Caco-2 (cell line): ENCODE measurements at regions of chr20 and their contacts with region 1.

Region 1: GRCh38 chr20:56592817-56593216 is 36.3 kb upstream of the TFAP2C start:
- DNase-seq: no peak
- H3K4me3 ChIP-seq: no peak overlapping the region
- H3K4me3 Mint-ChIP-seq: no peak overlapping the region
- H3K27ac Mint-ChIP-seq: peak overlapping the region; percentile 89
- H3K4me1 ChIP-seq: peaks cover 50% of the 10 kb centered on the region
- H3K4me1 Mint-ChIP-seq: peaks cover 51% of the 10 kb centered on the region
- H3K27me3 ChIP-seq: no peaks in the 10 kb centered on the region
- H3K27me3 Mint-ChIP-seq: no peaks in the 10 kb centered on the region
- CTCF ChIP-seq: no peak

Region 2: GRCh38 chr20:56391037-56391436 is 201.8 kb before region 1 on chr20:
- CTCF ChIA-PET with region 1: no interaction called
- POLR2A ChIA-PET with region 1: no interaction called
- intact Hi-C with region 1: no loop called
- DNase-seq: no peak
- H3K4me3 ChIP-seq: peak overlapping the region; percentile 74
- H3K4me3 Mint-ChIP-seq: no peak overlapping the region
- H3K27ac Mint-ChIP-seq: no peak overlapping the region
- H3K4me1 ChIP-seq: peaks cover 13% of the 10 kb centered on the region
- H3K4me1 Mint-ChIP-seq: peaks cover 22% of the 10 kb centered on the region
- H3K27me3 ChIP-seq: no peaks in the 10 kb centered on the region
- H3K27me3 Mint-ChIP-seq: no peaks in the 10 kb centered on the region
- CTCF ChIP-seq: no peak

Region 3: DNA sequence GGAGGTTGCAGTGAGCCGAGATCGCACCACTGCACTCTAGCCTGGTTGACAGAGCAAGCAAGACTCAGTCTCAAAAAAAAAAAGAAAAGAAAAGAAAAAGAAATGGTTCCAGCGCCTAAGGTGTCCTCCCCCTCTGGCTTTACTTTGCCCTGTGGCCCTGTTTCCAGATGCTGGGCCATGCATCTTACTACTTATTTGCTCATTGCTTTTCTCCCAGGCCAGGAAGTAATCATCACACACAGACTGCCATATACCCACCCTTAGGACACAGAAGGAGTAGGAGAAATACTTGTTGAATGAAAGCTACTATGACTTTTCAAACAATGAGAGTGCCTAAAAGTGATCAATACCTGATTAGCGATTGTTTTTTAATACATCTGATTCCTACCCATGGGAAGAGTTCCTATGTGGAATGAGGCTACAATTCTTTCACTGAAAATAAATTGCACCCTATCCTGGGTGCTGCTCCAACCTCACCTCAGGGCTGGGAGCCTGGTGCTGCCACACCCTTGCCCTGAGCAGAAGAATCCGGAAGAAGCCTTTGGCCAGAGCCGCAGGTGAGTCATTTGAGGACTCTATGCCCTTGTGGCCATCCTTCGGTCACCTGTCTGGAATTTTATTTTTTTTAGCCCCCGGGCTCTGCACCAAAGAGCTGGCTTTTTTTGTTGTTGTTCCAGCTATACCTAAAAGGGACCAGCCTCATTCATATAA is 13.5 kb after region 1 on chr20:
- CTCF ChIA-PET with region 1: no interaction called
- POLR2A ChIA-PET with region 1: no interaction called
- intact Hi-C with region 1: loop called (anchors 1 kb)
- DNase-seq: peak; percentile 94 to 97
- H3K4me3 ChIP-seq: no peak overlapping the region
- H3K4me3 Mint-ChIP-seq: peak overlapping the region; percentile 45
- H3K27ac Mint-ChIP-seq: peak overlapping the region; percentile 94
- H3K4me1 ChIP-seq: peaks cover 63% of the 10 kb centered on the region
- H3K4me1 Mint-ChIP-seq: peaks cover 72% of the 10 kb centered on the region
- H3K27me3 ChIP-seq: no peaks in the 10 kb centered on the region
- H3K27me3 Mint-ChIP-seq: no peaks in the 10 kb centered on the region
- CTCF ChIP-seq: peak in 1 of 2 experiments; percentile 3